B cell (primary cell): ENCODE measurements at regions of chr2 and their contacts with region 1.

Region 1: GRCh38 chr2:202577250-202578183 is 57.3 kb upstream of the FAM117B start:
- DNase-seq: no peak
- ATAC-seq: no peak
- H3K4me3 ChIP-seq: no peak overlapping the region
- H3K4me3 Mint-ChIP-seq: no peak overlapping the region
- H3K27ac ChIP-seq: no peak overlapping the region
- H3K27ac Mint-ChIP-seq: no peak overlapping the region
- H3K4me1 ChIP-seq: no peaks in the 10 kb centered on the region
- H3K4me1 Mint-ChIP-seq: no peaks in the 10 kb centered on the region
- H3K27me3 ChIP-seq: no peaks in the 10 kb centered on the region
- H3K27me3 Mint-ChIP-seq: no peaks in the 10 kb centered on the region
- CTCF ChIP-seq: no peak

Region 2: DNA sequence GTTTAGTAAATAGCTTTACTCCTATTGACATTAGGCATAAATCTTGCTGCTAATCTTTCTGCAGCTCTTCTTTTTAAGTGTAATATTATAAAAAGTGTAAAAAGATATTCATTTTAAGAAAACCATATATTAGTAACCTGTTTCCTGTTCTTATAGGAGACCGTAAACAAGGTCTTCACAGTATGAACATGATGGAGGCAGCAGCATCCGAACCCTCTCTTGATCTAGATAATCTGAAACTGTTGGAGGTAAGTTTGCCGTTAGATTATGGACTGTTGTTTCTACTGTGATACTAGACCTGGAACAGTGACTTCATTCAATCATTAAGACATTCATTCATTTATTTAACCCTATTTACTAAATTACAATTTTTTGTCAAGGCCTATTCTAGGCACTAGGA is 62.8 kb before region 1 on chr2:
- CTCF ChIA-PET with region 1: no interaction called
- POLR2A ChIA-PET with region 1: no interaction called
- intact Hi-C with region 1: no loop called
- DNase-seq: no peak
- ATAC-seq: no peak
- H3K4me3 ChIP-seq: no peak overlapping the region
- H3K4me3 Mint-ChIP-seq: no peak overlapping the region
- H3K27ac ChIP-seq: no peak overlapping the region
- H3K27ac Mint-ChIP-seq: no peak overlapping the region
- H3K4me1 ChIP-seq: no peaks in the 10 kb centered on the region
- H3K4me1 Mint-ChIP-seq: no peaks in the 10 kb centered on the region
- H3K27me3 ChIP-seq: no peaks in the 10 kb centered on the region
- H3K27me3 Mint-ChIP-seq: no peaks in the 10 kb centered on the region
- CTCF ChIP-seq: no peak

Region 3: GRCh38 chr2:202564226-202564625 is 13.3 kb before region 1 on chr2:
- CTCF ChIA-PET with region 1: no interaction called
- POLR2A ChIA-PET with region 1: no interaction called
- intact Hi-C with region 1: no loop called
- DNase-seq: no peak
- ATAC-seq: no peak
- H3K4me3 ChIP-seq: no peak overlapping the region
- H3K4me3 Mint-ChIP-seq: no peak overlapping the region
- H3K27ac ChIP-seq: no peak overlapping the region
- H3K27ac Mint-ChIP-seq: no peak overlapping the region
- H3K4me1 ChIP-seq: no peaks in the 10 kb centered on the region
- H3K4me1 Mint-ChIP-seq: no peaks in the 10 kb centered on the region
- H3K27me3 ChIP-seq: no peaks in the 10 kb centered on the region
- H3K27me3 Mint-ChIP-seq: no peaks in the 10 kb centered on the region
- CTCF ChIP-seq: no peak

Region 4: GRCh38 chr2:202870431-202871299 is 293.1 kb after region 1 on chr2:
- CTCF ChIA-PET with region 1: interaction called, 31 read pairs
- POLR2A ChIA-PET with region 1: no interaction called
- intact Hi-C with region 1: loop called (anchors 1 kb)
- DNase-seq: peak; percentile 75
- ATAC-seq: peak; percentile 77
- H3K4me3 ChIP-seq: peak overlapping the region; percentile 46 to 75 (median 71)
- H3K4me3 Mint-ChIP-seq: peak overlapping the region; percentile 96
- H3K27ac ChIP-seq: peak overlapping the region; percentile 35 to 65
- H3K27ac Mint-ChIP-seq: peak overlapping the region; percentile 86
- H3K4me1 ChIP-seq: peaks cover 0 to 4% of the 10 kb centered on the region in 2 donors
- H3K4me1 Mint-ChIP-seq: peaks cover 6% of the 10 kb centered on the region
- H3K27me3 ChIP-seq: no peaks in the 10 kb centered on the region
- H3K27me3 Mint-ChIP-seq: no peaks in the 10 kb centered on the region
- CTCF ChIP-seq: peak; percentile 83

Region 5: GRCh38 chr2:203225423-203226039 is 648.0 kb after region 1 on chr2:
- CTCF ChIA-PET with region 1: interaction called, 4 read pairs
- POLR2A ChIA-PET with region 1: no interaction called
- intact Hi-C with region 1: loop called (anchors 5 kb)
- DNase-seq: peak; percentile 46
- ATAC-seq: peak; percentile 56
- H3K4me3 ChIP-seq: no peak overlapping the region
- H3K4me3 Mint-ChIP-seq: no peak overlapping the region
- H3K27ac ChIP-seq: no peak overlapping the region
- H3K27ac Mint-ChIP-seq: no peak overlapping the region
- H3K4me1 ChIP-seq: no peaks in the 10 kb centered on the region
- H3K4me1 Mint-ChIP-seq: no peaks in the 10 kb centered on the region
- H3K27me3 ChIP-seq: no peaks in the 10 kb centered on the region
- H3K27me3 Mint-ChIP-seq: no peaks in the 10 kb centered on the region
- CTCF ChIP-seq: peak; percentile 80

Region 6: DNA sequence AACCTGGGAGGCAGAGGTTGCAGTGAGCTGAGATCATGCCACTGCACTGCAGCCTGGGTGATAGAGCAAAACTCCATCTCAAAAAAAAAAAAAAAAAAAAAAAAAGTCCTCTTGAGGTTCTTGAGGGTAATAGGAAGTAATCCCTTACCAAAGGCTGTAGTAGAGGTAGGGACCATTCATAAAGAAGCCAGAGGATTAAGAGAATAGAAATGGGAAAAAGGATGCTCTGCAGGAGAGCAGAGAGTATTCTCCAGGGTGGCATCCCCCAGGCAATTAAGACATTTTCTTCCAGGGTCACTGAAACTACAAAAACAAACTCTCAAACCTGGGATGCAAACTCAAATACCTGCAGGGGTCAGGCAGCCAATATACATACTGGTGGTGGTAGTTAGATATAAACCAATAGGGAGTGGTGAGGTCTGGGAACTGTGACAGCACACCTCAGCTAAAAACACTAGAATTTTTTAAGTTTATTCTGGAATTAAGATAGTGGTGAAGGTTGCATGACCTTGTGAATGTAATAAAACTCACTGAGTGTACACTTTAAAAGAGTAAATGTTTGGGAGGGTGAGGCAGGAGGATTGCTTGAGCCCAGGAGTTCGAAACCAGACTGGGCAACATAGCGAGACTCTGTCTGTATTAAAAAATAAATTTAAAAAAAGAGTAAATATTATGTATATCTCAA is 932.9 kb after region 1 on chr2:
- CTCF ChIA-PET with region 1: no interaction called
- POLR2A ChIA-PET with region 1: interaction called, 12 read pairs
- intact Hi-C with region 1: no loop called
- DNase-seq: no peak
- ATAC-seq: no peak
- H3K4me3 ChIP-seq: no peak overlapping the region
- H3K4me3 Mint-ChIP-seq: no peak overlapping the region
- H3K27ac ChIP-seq: no peak overlapping the region
- H3K27ac Mint-ChIP-seq: no peak overlapping the region
- H3K4me1 ChIP-seq: no peaks in the 10 kb centered on the region
- H3K4me1 Mint-ChIP-seq: no peaks in the 10 kb centered on the region
- H3K27me3 ChIP-seq: no peaks in the 10 kb centered on the region
- H3K27me3 Mint-ChIP-seq: peaks cover 20% of the 10 kb centered on the region
- CTCF ChIP-seq: no peak